AG04449 (cell line): ENCODE measurements at regions of chr2 and their contacts with region 1.

Region 1: DNA sequence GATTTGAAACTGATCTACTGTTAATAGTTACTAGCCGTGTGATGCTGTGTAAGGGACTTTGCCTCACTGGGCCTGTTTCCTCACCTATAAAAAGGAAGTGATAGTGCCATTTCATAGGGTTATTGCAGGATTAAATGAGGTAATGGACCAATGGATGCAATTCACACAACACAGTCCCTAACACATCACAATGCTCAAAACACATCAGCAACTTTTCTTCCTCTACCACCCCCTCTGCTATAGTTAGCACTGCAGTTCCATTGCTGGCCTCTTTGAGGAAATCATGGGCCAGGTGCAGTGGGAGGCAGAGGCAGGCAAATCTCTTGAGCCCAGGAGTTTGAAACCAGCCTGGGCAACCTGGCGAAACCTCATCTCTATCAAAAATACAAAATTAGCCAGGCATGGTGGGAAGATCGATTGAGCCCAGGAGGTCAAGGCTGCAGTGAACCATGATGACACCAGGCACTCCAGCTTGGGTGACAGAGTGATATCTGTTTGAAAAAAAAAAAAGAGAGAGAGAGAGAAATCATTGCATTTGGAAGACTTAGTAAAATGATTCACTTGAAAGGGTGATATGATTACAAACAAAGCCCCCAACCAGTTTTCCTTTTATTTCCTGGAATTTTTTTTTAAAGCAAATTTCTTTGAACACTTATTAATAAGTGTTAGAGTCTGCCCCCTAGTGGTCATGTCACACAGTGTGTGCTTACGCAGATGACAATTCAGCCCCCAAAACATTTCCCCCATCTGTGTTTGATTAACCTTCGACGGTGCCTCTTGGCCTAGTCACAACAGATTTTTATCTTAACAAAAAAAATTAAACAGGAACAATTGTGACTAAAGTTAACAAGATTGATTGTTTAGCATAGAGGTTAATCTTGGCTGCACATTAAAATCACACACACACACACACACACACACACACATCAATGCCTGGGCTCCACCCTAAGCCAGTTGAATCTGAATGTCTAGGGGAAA is 88.6 kb upstream of the BCL11A start:
- DNase-seq: no peak
- H3K4me3 ChIP-seq: no peak overlapping the region
- CTCF ChIP-seq: peak; percentile 43

Region 2: GRCh38 chr2:60530660-60531281 is 111.3 kb before region 1 on chr2:
- CTCF ChIA-PET with region 1: no interaction called
- POLR2A ChIA-PET with region 1: no interaction called
- DNase-seq: no peak
- H3K4me3 ChIP-seq: no peak overlapping the region
- CTCF ChIP-seq: no peak

Region 3: GRCh38 chr2:60608679-60609078 is 33.4 kb before region 1 on chr2:
- CTCF ChIA-PET with region 1: no interaction called
- POLR2A ChIA-PET with region 1: no interaction called
- DNase-seq: no peak
- H3K4me3 ChIP-seq: no peak overlapping the region
- CTCF ChIP-seq: no peak

Region 4: GRCh38 chr2:60659026-60659425 is 16.9 kb after region 1 on chr2:
- CTCF ChIA-PET with region 1: interaction called, 14 read pairs
- POLR2A ChIA-PET with region 1: no interaction called
- DNase-seq: no peak
- H3K4me3 ChIP-seq: no peak overlapping the region
- CTCF ChIP-seq: no peak

Region 5: GRCh38 chr2:61065715-61066709 is 423.9 kb after region 1 on chr2 and contains the start of gene SANBR:
- CTCF ChIA-PET with region 1: no interaction called
- POLR2A ChIA-PET with region 1: no interaction called
- DNase-seq: no peak
- H3K4me3 ChIP-seq: peak within 1 kb of the TSS; percentile 80
- CTCF ChIP-seq: no peak